IMR-90 (cell line): ENCODE measurements at regions of chr5 and their contacts with region 1.

Region 1: GRCh38 chr5:160805376-160805775 is 46.6 kb downstream of the ATP10B start:
- DNase-seq: no peak
- ATAC-seq: no peak
- H3K4me3 ChIP-seq: no peak overlapping the region
- H3K27ac ChIP-seq: no peak overlapping the region
- H3K4me1 ChIP-seq: no peaks in the 10 kb centered on the region
- H3K27me3 ChIP-seq: no peaks in the 10 kb centered on the region
- CTCF ChIP-seq: no peak
- POLR2A ChIP-seq: no peak
- RAD21 ChIP-seq: no peak

Region 2: GRCh38 chr5:159741829-159742228 is 1063.5 kb before region 1 on chr5:
- CTCF ChIA-PET with region 1: no interaction called
- POLR2A ChIA-PET with region 1: no interaction called
- dilution Hi-C with region 1: no loop called
- in situ Hi-C with region 1: no loop called
- intact Hi-C with region 1: loop called (anchors 5 kb)
- DNase-seq: no peak
- ATAC-seq: no peak
- H3K4me3 ChIP-seq: no peak overlapping the region
- H3K27ac ChIP-seq: no peak overlapping the region
- H3K4me1 ChIP-seq: no peaks in the 10 kb centered on the region
- H3K27me3 ChIP-seq: peaks cover 5% of the 10 kb centered on the region
- CTCF ChIP-seq: no peak
- POLR2A ChIP-seq: no peak
- RAD21 ChIP-seq: no peak